PC-9 (cell line): ENCODE measurements at regions of chr10 and their contacts with region 1.

Region 1: DNA sequence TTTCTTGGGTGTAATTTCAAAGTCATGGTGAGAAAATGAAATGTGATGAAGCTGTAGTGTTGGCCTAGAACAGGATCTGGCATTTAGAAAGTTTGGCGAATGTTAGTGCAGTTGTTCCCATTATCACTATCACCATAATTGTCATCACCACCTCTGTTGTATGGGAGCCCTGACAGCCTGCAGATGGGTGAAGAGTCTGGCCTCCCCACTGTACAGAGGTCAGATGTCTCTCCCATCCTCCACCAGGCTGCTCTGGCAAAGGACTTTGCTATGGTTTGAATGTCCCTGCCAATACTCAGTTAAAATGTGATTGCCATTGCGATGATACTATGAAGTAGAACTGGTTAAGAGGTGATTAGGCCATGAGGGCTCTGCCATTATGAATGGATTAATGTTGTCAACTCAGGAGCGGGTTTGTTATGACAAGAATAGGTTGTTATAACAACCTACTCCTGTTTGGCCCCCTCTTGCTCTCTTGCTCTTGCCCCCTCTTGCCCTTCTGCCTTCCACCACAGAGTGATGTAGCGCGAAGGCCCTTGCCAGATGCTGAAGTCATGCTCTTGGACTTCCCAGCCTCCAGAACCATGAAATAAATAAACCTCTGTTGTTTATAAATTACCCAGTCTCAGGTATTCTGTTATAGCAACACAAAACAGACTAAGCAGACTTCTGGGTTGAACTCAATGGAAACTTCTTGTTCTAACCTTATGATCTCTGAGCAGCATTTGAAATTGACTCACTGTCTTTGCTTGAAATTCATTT is 90.0 kb downstream of the GRK5 start:
- DNase-seq: no peak
- H3K4me3 ChIP-seq: no peak overlapping the region
- H3K27ac ChIP-seq: no peak overlapping the region
- H3K4me1 ChIP-seq: peaks cover 14% of the 10 kb centered on the region
- H3K27me3 ChIP-seq: no peaks in the 10 kb centered on the region
- CTCF ChIP-seq: no peak

Region 2: DNA sequence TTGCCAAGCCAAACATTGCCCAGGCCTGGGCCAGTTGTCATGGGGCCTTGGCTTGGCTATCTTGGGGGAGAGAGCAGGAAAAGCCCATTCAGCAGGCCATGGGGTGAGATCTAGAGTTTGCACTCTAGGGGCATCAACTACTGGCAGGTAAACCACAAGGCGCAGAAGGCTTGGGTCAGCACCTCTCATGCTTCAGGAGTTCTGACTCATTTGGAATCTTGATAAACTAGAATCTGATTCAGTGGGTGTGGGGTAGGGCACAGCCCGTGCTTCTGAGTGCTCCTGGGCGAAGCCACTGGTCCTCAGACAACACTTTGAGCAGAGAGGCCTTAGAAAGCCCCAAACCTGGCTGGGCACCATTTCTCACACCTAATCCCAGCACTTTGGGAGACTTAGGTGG is 164.0 kb after region 1 on chr10:
- CTCF ChIA-PET with region 1: no interaction called
- POLR2A ChIA-PET with region 1: interaction called, 37 read pairs
- intact Hi-C with region 1: no loop called
- DNase-seq: peak; percentile 77 to 92
- H3K4me3 ChIP-seq: peak overlapping the region; percentile 13; the same call in 1 of the 2 replicates
- H3K27ac ChIP-seq: peak overlapping the region; percentile 90
- H3K4me1 ChIP-seq: peaks cover 41% of the 10 kb centered on the region
- H3K27me3 ChIP-seq: no peaks in the 10 kb centered on the region
- CTCF ChIP-seq: no peak